ENCODE measurements at regions of chr15 and their contacts with region 1.

Region 1: DNA sequence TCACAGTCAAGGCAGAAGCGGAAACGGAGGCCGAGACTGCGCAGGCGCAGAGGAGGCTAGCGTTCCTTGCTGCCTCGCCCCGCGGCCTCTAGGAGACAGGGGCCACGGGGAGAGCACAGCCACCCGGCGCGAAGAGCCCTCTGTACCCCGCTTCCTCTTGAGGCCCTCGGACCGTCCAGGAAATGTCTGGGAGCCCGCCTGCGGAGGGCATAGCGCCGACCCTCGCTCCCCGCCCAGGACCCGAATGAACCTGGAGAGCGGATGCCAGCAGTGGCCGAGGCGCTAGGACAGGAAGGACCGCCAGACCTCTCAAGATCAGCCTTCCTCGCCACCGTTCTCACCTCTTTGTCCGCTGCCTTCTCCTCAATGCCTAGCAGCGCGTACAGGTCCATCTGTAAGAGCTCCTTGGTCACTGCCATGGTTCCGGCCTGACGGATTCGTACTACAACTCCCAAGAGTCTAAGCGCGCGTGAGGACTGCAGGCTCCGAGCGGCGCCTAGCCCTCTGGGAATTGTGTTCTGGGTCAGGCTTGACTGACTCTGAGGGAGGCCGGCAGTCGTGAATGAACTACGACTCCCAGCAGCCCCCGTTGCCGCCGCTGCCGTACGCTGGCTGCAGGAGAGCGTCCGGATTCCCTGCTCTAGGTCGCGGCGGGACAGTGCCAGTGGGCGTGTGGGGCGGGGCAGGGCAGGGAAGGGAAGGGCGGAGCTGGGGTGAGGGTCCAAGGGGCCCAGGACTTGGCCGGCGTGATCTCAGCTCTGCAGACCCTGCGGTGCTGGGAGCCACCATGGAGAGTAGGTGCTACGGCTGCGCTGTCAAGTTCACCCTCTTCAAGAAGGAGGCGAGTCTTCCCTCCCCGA is at the starts of genes DNAJC17 and ZFYVE19:
- DNase-seq: peak; percentile 94 to 99 (median 98)
- H3K4me3 ChIP-seq: peak within 1 kb of the TSS; percentile 70 to 100 (median 95)
- H3K27ac ChIP-seq: peak within 1 kb of the TSS; percentile 75 to 99 (median 95)
- H3K27me3 ChIP-seq: no peaks in the 10 kb centered on the region
- CTCF ChIP-seq: peak in 24 of 56 donors; percentile 3 to 58 (median 20)
- total RNA-seq, gene DNAJC17: 17.9 to 54.4 (median 34.3) TPM
- total RNA-seq, gene ZFYVE19: 17.6 to 48.7 (median 30.8) TPM

Region 2: DNA sequence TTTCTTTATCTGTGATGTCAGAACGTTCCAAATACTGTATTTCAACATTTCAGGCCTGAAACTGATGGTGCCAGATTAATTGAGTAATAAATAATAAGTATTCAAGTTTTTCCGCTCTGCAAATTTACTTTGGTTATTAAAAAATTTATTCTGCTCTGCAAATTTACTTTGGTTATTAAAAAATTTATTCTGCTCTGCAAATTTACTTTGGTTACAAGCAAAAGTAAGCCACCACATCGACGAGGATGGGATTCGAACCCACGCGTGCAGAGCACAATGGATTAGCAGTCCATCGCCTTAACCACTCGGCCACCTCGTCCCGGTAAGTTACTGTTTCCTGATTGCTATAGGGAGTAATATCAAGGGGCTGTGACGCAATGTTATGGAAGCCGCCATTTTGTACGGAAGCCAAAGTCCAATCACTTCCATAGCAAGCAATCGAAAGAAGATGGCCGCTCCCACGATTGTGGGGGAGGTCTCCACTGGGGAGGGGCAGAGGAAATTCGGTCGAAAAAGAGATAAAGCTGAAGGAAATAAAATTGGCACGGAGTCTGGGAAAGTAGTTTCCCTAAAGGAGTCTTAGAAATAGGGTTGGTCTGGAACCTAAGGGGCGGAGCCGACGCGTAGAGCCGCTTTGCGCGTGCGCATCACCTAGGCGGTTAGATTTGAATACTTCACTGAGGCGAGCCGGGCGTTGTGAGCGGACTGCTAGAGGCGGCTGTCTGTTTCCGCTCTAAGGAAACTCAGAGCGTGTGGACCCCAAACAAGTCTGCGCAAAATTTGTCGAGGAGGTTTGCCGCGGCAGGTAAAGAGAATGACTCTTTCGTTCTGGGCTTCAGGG is 213.4 kb before region 1 on chr15 and contains the start of gene KNL1:
- intact Hi-C with region 1: loop called in 1 of 2 experiments (anchors 2 kb)
- DNase-seq: peak; percentile 88 to 97 (median 92)
- H3K4me3 ChIP-seq: peak within 1 kb of the TSS; percentile 50 to 89 (median 72)
- H3K27ac ChIP-seq: peak within 1 kb of the TSS; percentile 70 to 99 (median 95)
- H3K27me3 ChIP-seq: peaks cover 0 to 15% (median 0%) of the 10 kb centered on the region in 45 donors
- CTCF ChIP-seq: peak in 24 of 56 donors; percentile 4 to 56 (median 24)
- total RNA-seq, gene KNL1: 0.04 to 2.4 (median 0.44) TPM in 108 of 120 experiments, not detected in the others

Region 3: DNA sequence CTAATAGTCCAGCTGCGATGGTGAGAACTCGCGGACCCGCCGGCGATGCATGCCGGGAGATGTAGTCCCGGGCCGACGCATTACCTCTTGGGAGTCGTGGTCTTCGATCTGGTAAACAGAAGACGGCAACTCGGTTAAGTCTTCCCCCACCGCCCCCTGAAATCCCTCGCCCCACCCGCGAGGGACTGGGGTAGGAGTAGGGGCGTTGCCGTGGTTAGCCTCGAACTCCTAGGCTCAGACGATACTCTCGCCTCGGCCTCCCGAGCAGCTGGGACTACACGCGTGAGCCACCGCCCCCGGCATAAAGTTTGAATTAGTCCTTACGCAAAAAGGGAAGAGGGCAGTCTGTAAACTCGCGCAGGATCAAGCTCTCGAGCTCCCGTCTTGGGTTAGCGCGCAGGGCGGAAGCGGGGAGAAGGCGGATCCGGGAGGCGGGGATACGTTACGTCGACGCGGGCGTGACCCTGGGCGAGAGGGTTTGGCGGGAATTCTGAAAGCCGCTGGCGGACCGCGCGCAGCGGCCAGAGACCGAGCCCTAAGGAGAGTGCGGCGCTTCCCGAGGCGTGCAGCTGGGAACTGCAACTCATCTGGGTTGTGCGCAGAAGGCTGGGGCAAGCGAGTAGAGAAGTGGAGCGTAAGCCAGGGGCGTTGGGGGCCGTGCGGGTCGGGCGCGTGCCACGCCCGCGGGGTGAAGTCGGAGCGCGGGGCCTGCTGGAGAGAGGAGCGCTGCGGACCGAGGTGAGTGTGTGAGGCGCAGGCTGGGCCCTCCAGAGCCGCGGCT is 112.4 kb before region 1 on chr15 and contains the start of gene RAD51:
- intact Hi-C with region 1: loop called in 1 of 2 experiments (anchors 1 kb)
- DNase-seq: peak; percentile 77 to 94 (median 92)
- H3K4me3 ChIP-seq: peak within 1 kb of the TSS; percentile 63 to 99 (median 91)
- H3K27ac ChIP-seq: peak within 1 kb of the TSS; percentile 90 to 100 (median 99)
- H3K27me3 ChIP-seq: no peaks in the 10 kb centered on the region
- CTCF ChIP-seq: peak in 11 of 56 donors; percentile 8 to 31 (median 14)
- total RNA-seq, gene RAD51: 0.23 to 3.8 (median 0.87) TPM in 85 of 120 experiments, not detected in the others

Region 4: GRCh38 chr15:40769274-40770146 is 37.7 kb before region 1 on chr15 and contains the start of gene C15orf62:
- intact Hi-C with region 1: loop called in 1 of 2 experiments (anchors 5 kb)
- DNase-seq: peak in 2 of 10 donors; percentile 41 to 70
- H3K4me3 ChIP-seq: peak within 1 kb of the TSS in 4 of 59 donors; percentile 0 to 36 (median 11)
- H3K27ac ChIP-seq: peak within 1 kb of the TSS in 50 of 59 donors; percentile 1 to 82 (median 49)
- H3K27me3 ChIP-seq: no peaks in the 10 kb centered on the region
- CTCF ChIP-seq: no peak
- total RNA-seq, gene C15orf62: 0.17 to 3.6 (median 0.96) TPM in 118 of 120 experiments, not detected in the others

Region 5: GRCh38 chr15:40825661-40826088 is 18.4 kb after region 1 on chr15:
- intact Hi-C with region 1: no loop called
- DNase-seq: no peak
- H3K4me3 ChIP-seq: no peak overlapping the region
- H3K27ac ChIP-seq: no peak overlapping the region
- H3K27me3 ChIP-seq: no peaks in the 10 kb centered on the region
- CTCF ChIP-seq: no peak

Measured in dorsolateral prefrontal cortex (tissue), 120 donors.